PC-9 (cell line): ENCODE measurements at regions of chr15 and their contacts with region 1.

Region 1: GRCh38 chr15:68252925-68253534 is 23.5 kb upstream of the CLN6 start:
- DNase-seq: peak; percentile 46 to 76
- H3K4me3 ChIP-seq: no peak overlapping the region
- H3K27ac ChIP-seq: no peak overlapping the region
- H3K4me1 ChIP-seq: no peaks in the 10 kb centered on the region
- H3K27me3 ChIP-seq: no peaks in the 10 kb centered on the region
- CTCF ChIP-seq: peak; percentile 81

Region 2: GRCh38 chr15:68200016-68200861 is 52.8 kb before region 1 on chr15:
- CTCF ChIA-PET with region 1: no interaction called
- POLR2A ChIA-PET with region 1: no interaction called
- intact Hi-C with region 1: no loop called
- DNase-seq: no peak
- H3K4me3 ChIP-seq: no peak overlapping the region
- H3K27ac ChIP-seq: no peak overlapping the region
- H3K4me1 ChIP-seq: no peaks in the 10 kb centered on the region
- H3K27me3 ChIP-seq: no peaks in the 10 kb centered on the region
- CTCF ChIP-seq: no peak

Region 3: GRCh38 chr15:68210821-68211655 is 42.0 kb before region 1 on chr15:
- CTCF ChIA-PET with region 1: no interaction called
- POLR2A ChIA-PET with region 1: no interaction called
- intact Hi-C with region 1: no loop called
- DNase-seq: peak in 1 of 2 experiments; percentile 38
- H3K4me3 ChIP-seq: no peak overlapping the region
- H3K27ac ChIP-seq: no peak overlapping the region
- H3K4me1 ChIP-seq: no peaks in the 10 kb centered on the region
- H3K27me3 ChIP-seq: no peaks in the 10 kb centered on the region
- CTCF ChIP-seq: peak; percentile 75

Region 4: DNA sequence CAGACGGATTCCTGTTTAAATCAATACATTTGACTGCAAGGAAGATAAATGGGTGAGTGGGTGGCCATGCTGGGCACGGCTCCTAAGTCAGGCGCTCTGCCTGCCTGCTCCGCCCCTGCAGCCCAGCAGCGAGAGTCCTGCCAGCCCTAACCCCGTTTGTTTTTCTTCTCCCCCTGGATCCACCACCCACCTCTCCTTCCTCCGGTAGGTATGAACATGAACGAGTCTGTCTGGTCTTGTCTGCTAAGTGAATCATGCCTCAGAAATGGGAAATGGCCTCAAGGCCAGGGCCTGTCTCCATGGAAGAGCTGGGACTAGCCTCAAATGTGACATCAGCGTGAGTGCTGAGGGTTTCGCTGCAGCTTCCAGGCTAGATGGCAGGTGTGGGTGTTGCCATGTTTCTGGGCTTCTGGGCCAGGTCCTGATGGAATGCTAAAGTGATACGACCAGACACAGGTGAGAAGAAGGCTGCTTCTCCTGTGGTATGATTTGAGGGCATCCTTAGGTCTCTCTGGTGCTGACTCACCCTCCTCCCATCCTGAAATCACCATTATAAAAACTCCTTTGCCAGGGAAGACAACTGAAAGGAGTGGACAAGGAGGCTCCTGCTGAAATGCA is 18.9 kb after region 1 on chr15:
- CTCF ChIA-PET with region 1: interaction called, 11 read pairs
- POLR2A ChIA-PET with region 1: interaction called, 4 read pairs
- intact Hi-C with region 1: loop called (anchors 1 kb)
- DNase-seq: peak; percentile 89 to 97
- H3K4me3 ChIP-seq: peak overlapping the region; percentile 43; the same call in 1 of the 2 replicates
- H3K27ac ChIP-seq: peak overlapping the region; percentile 86
- H3K4me1 ChIP-seq: peaks cover 62% of the 10 kb centered on the region
- H3K27me3 ChIP-seq: no peaks in the 10 kb centered on the region
- CTCF ChIP-seq: no peak

Region 5: GRCh38 chr15:68298882-68299381 is 45.9 kb after region 1 on chr15:
- CTCF ChIA-PET with region 1: interaction called, 4 read pairs
- POLR2A ChIA-PET with region 1: interaction called, 22 read pairs
- intact Hi-C with region 1: no loop called
- DNase-seq: no peak
- H3K4me3 ChIP-seq: no peak overlapping the region
- H3K27ac ChIP-seq: no peak overlapping the region
- H3K4me1 ChIP-seq: no peaks in the 10 kb centered on the region
- H3K27me3 ChIP-seq: no peaks in the 10 kb centered on the region
- CTCF ChIP-seq: no peak

Region 6: GRCh38 chr15:68550481-68551295 is 297.7 kb after region 1 on chr15:
- CTCF ChIA-PET with region 1: interaction called, 3 read pairs
- POLR2A ChIA-PET with region 1: no interaction called
- intact Hi-C with region 1: loop called (anchors 2 kb)
- DNase-seq: peak in 1 of 2 experiments; percentile 68
- H3K4me3 ChIP-seq: no peak overlapping the region
- H3K27ac ChIP-seq: no peak overlapping the region
- H3K4me1 ChIP-seq: no peaks in the 10 kb centered on the region
- H3K27me3 ChIP-seq: peaks cover 8% of the 10 kb centered on the region; the same call in 1 of the 2 replicates
- CTCF ChIP-seq: peak; percentile 86

Region 7: DNA sequence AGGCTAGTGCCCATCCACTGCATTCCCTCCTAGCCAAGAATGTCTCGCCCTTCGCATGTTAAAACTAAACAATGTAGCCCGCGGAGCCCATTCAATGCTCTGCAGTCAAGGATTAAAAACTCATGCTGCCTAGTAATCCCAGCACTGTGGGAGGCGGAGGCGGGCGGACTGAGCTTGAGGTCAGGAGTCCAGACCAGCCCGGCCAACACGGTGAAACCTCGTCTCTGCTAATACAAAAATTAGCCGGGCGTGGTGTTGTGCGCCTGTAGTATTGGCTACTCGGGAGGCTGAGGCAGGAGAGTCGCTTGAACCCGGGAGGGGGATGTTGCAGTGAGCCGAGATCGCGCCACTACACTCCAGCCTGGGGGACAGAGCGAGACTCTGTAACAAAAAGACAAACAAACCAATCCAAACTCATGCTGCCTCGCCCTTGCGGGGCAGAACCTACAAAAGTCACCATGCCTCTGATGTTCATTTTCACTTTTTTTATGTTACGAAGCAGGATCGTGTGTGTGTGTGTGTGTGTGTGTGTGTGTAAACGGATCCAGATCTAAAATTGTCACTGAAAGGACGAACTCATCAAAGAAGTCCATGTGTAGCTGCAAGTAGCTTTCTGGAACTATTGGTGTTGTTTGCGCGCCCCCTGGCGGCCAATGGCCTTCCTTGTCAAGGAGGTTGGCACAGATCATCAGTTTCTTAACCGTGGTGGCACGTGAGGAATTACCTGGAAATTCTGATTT is 622.5 kb after region 1 on chr15:
- CTCF ChIA-PET with region 1: interaction called, 9 read pairs
- POLR2A ChIA-PET with region 1: no interaction called
- intact Hi-C with region 1: loop called (anchors 5 kb)
- DNase-seq: peak; percentile 70 to 83
- H3K4me3 ChIP-seq: no peak overlapping the region
- H3K27ac ChIP-seq: no peak overlapping the region
- H3K4me1 ChIP-seq: no peaks in the 10 kb centered on the region
- H3K27me3 ChIP-seq: no peaks in the 10 kb centered on the region
- CTCF ChIP-seq: peak; percentile 84